AG04450 (cell line): ENCODE measurements at regions of chr6 and their contacts with region 1.

Region 1: DNA sequence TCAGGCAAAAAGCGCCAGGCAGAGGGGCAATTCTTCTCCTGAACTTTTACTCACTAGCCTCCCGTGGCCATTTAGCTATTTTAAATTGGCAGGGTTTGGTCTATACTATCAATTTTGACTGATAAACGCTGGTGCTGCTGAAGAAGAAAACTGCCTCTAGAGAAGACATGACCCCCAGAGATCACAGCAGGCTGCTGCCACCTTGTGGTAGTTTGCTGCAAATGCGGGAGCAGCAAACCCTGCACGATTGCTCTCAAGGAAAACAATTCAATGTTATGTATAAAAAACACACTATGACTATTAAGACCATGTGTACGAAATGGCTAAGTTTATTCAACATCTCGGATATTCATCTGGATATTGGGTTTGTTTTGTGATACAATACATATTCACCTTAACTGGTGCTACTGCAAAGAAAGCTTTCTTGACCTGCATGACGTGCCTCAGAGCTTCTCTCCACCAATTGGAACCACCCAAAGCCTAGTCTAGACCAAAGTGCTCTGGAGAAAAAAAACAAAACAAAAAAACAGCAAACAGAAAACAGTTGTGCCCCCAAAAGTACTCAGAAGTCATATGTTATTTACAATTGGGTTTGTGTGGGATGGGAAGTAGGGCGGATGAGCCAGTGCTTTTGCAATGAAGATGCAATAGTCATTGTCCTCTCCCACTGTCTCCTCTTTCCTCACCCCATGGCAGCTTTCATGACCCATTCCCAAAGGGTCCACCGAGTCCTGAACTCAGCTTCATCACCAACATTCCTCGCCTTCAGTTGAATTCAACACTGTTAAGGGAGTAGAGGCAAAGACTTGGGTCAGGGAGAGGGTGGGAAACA is 19.6 kb upstream of the IL17F start:
- DNase-seq: peak; percentile 49
- H3K4me3 ChIP-seq: no peak overlapping the region
- H3K27ac ChIP-seq: no peak overlapping the region
- H3K27me3 ChIP-seq: no peaks in the 10 kb centered on the region
- CTCF ChIP-seq: peak; percentile 99

Region 2: GRCh38 chr6:52049252-52050050 is 214.5 kb before region 1 on chr6:
- CTCF ChIA-PET with region 1: interaction called, 24 read pairs
- POLR2A ChIA-PET with region 1: no interaction called
- DNase-seq: no peak
- H3K4me3 ChIP-seq: no peak overlapping the region
- H3K27ac ChIP-seq: no peak overlapping the region
- H3K27me3 ChIP-seq: no peaks in the 10 kb centered on the region
- CTCF ChIP-seq: peak; percentile 75

Region 3: GRCh38 chr6:52098634-52099185 is 165.2 kb before region 1 on chr6:
- CTCF ChIA-PET with region 1: interaction called, 38 read pairs
- POLR2A ChIA-PET with region 1: no interaction called
- DNase-seq: no peak
- H3K4me3 ChIP-seq: no peak overlapping the region
- H3K27ac ChIP-seq: no peak overlapping the region
- H3K27me3 ChIP-seq: no peaks in the 10 kb centered on the region
- CTCF ChIP-seq: no peak

Region 4: GRCh38 chr6:52176550-52176949 is 87.4 kb before region 1 on chr6:
- CTCF ChIA-PET with region 1: interaction called, 11 read pairs
- POLR2A ChIA-PET with region 1: no interaction called
- DNase-seq: no peak
- H3K4me3 ChIP-seq: no peak overlapping the region
- H3K27ac ChIP-seq: no peak overlapping the region
- H3K27me3 ChIP-seq: peaks cover 2% of the 10 kb centered on the region
- CTCF ChIP-seq: no peak

Region 5: GRCh38 chr6:52243282-52243893 is 20.5 kb before region 1 on chr6:
- CTCF ChIA-PET with region 1: interaction called, 34 read pairs
- POLR2A ChIA-PET with region 1: no interaction called
- DNase-seq: no peak
- H3K4me3 ChIP-seq: no peak overlapping the region
- H3K27ac ChIP-seq: no peak overlapping the region
- H3K27me3 ChIP-seq: peaks cover 11% of the 10 kb centered on the region
- CTCF ChIP-seq: no peak

Region 6: GRCh38 chr6:52317841-52318581 is 54.1 kb after region 1 on chr6:
- CTCF ChIA-PET with region 1: no interaction called
- POLR2A ChIA-PET with region 1: no interaction called
- DNase-seq: peak; percentile 11
- H3K4me3 ChIP-seq: no peak overlapping the region
- H3K27ac ChIP-seq: no peak overlapping the region
- H3K27me3 ChIP-seq: no peaks in the 10 kb centered on the region
- CTCF ChIP-seq: no peak

Region 7: GRCh38 chr6:52389626-52390360 is 125.9 kb after region 1 on chr6:
- CTCF ChIA-PET with region 1: interaction called, 12 read pairs
- POLR2A ChIA-PET with region 1: no interaction called
- DNase-seq: no peak
- H3K4me3 ChIP-seq: no peak overlapping the region
- H3K27ac ChIP-seq: no peak overlapping the region
- H3K27me3 ChIP-seq: no peaks in the 10 kb centered on the region
- CTCF ChIP-seq: no peak

Region 8: GRCh38 chr6:52664186-52664990 is 400.5 kb after region 1 on chr6:
- CTCF ChIA-PET with region 1: interaction called, 10 read pairs
- POLR2A ChIA-PET with region 1: no interaction called
- DNase-seq: peak; percentile 88
- H3K4me3 ChIP-seq: peak overlapping the region; percentile 76
- H3K27ac ChIP-seq: no peak overlapping the region
- H3K27me3 ChIP-seq: no peaks in the 10 kb centered on the region
- CTCF ChIP-seq: no peak